ENCODE measurements at regions of chr9 and their contacts with region 1.

Region 1: DNA sequence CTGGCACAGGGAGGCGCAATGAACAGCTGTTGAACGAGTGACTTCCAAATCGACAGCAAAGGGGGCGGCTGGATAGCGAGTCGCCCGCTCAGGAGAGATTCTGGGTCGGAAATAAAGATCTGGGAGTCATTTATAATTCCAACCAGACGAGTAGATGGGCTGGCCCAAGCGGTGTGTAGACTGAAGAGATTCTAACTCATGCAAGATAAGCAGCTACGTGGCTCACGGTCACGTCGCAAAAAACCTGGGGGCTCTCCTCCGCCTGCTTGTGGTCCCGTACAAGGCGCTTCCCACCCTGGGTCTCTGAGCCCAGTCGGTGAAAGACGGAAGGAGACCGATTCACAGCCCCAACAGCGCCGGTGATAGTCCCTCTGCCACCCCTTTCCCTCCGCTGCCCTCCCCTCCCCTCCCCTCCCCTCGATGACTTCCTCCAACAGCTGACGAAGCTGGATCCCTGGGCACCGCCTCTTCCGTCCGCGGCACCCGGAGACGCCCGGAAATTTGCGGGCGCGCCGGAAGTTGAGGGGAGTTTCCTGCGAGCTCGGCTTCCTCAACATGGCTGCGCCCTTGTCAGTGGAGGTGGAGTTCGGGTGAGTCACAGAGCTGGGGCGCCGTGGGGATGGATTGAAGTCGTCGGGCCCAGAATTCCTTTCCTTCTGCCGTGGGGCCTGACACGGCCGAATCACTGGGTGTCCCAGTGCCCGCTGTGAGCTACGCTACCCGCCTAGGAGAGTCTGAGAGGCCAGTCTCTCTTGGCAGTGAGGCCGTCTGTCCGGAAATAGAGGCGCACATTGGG is at the start of gene URM1:
- DNase-seq: peak; percentile 88
- ATAC-seq: peak; percentile 89
- H3K4me3 ChIP-seq: peak within 1 kb of the TSS; percentile 67 to 91
- H3K27ac ChIP-seq: peak within 1 kb of the TSS; percentile 79
- H3K4me1 ChIP-seq: peaks cover 13 to 16% of the 10 kb centered on the region in 2 experiments; a peak in 3 of 4 replicates
- H3K27me3 ChIP-seq: no peaks in the 10 kb centered on the region
- CTCF ChIP-seq: no peak
- POLR2A ChIP-seq: peak; percentile 74
- RAD21 ChIP-seq: no peak
- total RNA-seq, gene URM1: 51.6 TPM

Region 2: DNA sequence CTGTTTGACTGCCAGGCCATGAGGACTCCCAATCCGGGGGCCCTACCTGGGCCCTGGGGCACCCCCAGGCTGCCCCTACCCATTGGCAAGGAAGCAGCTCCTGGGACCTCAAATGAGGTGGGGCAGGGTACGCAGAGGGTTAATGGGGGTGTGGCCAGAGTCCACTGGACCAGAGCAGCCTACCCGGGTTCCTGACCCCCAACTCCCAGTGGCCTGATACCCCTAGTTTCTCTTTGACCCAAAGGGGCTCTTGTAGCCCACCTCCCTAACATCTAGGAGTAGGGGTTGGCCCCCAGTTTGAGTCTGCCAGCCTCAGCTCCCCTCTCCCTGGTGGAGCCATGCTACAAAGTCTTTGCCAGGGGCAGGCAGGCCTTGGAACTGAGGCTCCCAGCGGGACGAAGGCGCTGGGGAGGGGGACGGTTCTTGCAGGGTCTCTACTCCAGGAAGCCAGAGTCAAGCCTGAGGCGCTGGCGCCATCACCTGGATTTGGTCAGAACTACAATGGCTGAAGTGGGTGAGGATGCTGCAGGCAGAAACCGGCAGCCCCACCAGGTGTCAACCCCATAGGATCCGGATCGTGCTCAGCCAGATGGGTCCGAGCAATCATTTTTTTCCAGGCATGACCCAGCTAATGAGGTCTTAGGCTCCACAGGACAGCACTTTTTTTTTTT is 41.2 kb after region 1 on chr9:
- CTCF ChIA-PET with region 1: interaction called, 5 read pairs
- POLR2A ChIA-PET with region 1: interaction called, 4 read pairs
- RAD21 ChIA-PET with region 1: no interaction called
- intact Hi-C with region 1: loop called (anchors 2 kb)
- DNase-seq: no peak
- ATAC-seq: peak; percentile 65
- H3K4me3 ChIP-seq: no peak overlapping the region
- H3K27ac ChIP-seq: no peak overlapping the region
- H3K4me1 ChIP-seq: peaks cover 4 to 14% of the 10 kb centered on the region in 2 experiments; a peak in 3 of 4 replicates
- H3K27me3 ChIP-seq: no peaks in the 10 kb centered on the region
- CTCF ChIP-seq: peak; percentile 67 to 81 (median 79)
- POLR2A ChIP-seq: no peak
- RAD21 ChIP-seq: peak; percentile 90

Region 3: DNA sequence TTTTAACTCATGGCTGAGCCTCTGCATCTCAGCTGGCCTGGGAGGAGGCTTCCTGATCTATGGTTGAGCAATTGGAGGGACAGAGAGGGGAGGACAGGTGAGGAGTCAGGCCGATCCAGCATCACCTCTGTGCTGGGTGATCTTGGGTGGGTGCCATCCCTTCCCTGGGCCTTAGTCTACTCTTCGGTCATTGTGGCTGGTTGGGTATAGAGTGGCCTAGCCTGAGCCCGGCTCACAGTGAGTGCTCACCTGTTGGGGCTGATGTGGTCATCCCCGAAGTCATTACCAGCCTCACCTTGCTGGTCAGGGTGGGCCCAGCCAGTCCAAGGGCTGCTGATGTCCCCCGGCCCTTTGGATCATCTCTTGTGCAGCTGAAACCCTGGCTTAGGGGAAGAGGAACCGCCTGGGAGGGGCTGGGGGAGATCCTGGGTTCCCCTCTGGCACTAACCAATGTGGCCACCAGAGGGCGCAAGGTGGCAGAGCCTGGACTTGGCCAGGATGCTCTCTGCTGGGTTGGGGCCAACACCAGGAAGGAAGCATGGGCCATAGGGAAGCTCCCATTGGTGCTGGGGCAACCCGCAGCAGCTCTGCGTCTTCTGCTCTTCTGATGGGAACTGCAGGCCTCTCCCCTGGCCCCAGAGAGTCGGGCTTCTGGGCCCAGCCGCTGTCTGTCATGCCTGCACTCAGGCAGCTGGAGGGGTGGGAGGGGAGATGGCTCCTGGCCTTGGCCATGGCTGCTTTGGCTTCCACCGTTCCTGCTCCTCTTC is 67.5 kb after region 1 on chr9:
- CTCF ChIA-PET with region 1: interaction called, 10 read pairs
- POLR2A ChIA-PET with region 1: no interaction called
- RAD21 ChIA-PET with region 1: no interaction called
- intact Hi-C with region 1: no loop called
- DNase-seq: no peak
- ATAC-seq: peak; percentile 97
- H3K4me3 ChIP-seq: no peak overlapping the region
- H3K27ac ChIP-seq: peak overlapping the region; percentile 41; the same call in 1 of the 2 replicates
- H3K4me1 ChIP-seq: peaks cover 2 to 10% of the 10 kb centered on the region in 2 experiments; a peak in 2 of 4 replicates
- H3K27me3 ChIP-seq: no peaks in the 10 kb centered on the region
- CTCF ChIP-seq: peak; percentile 67 to 96 (median 92)
- POLR2A ChIP-seq: no peak
- RAD21 ChIP-seq: peak; percentile 80

Region 4: GRCh38 chr9:128628471-128629048 is 257.5 kb after region 1 on chr9:
- CTCF ChIA-PET with region 1: no interaction called
- POLR2A ChIA-PET with region 1: no interaction called
- RAD21 ChIA-PET with region 1: no interaction called
- intact Hi-C with region 1: no loop called
- DNase-seq: no peak
- ATAC-seq: peak; percentile 60
- H3K4me3 ChIP-seq: no peak overlapping the region
- H3K27ac ChIP-seq: no peak overlapping the region; the same call in 1 of the 2 replicates
- H3K4me1 ChIP-seq: peaks cover 0 to 10% of the 10 kb centered on the region in 2 experiments; a peak in 2 of 4 replicates
- H3K27me3 ChIP-seq: no peaks in the 10 kb centered on the region
- CTCF ChIP-seq: no peak
- POLR2A ChIP-seq: no peak
- RAD21 ChIP-seq: no peak

Measured in HCT116 (cell line).